PC-3 (cell line): ENCODE measurements at regions of chr18 and their contacts with region 1.

Region 1: GRCh38 chr18:23307567-23308295 is 145.4 kb upstream of the RIOK3 start:
- DNase-seq: peak; percentile 32
- ATAC-seq: peak; percentile 16; the same call in 1 of the 2 replicates
- H3K4me3 ChIP-seq: no peak overlapping the region
- H3K27ac ChIP-seq: no peak overlapping the region
- H3K4me1 ChIP-seq: peaks cover 28% of the 10 kb centered on the region
- H3K27me3 ChIP-seq: no peaks in the 10 kb centered on the region
- CTCF ChIP-seq: no peak

Region 2: GRCh38 chr18:23377669-23378301 is 70.1 kb after region 1 on chr18:
- CTCF ChIA-PET with region 1: interaction called, 3 read pairs
- POLR2A ChIA-PET with region 1: no interaction called
- intact Hi-C with region 1: loop called (anchors 1 kb)
- DNase-seq: peak; percentile 89
- ATAC-seq: peak; percentile 65
- H3K4me3 ChIP-seq: peak overlapping the region; percentile 29; the same call in 1 of the 2 replicates
- H3K27ac ChIP-seq: peak overlapping the region; percentile 86
- H3K4me1 ChIP-seq: peaks cover 38% of the 10 kb centered on the region
- H3K27me3 ChIP-seq: no peaks in the 10 kb centered on the region
- CTCF ChIP-seq: no peak

Region 3: GRCh38 chr18:23523429-23524220 is 215.9 kb after region 1 on chr18:
- CTCF ChIA-PET with region 1: no interaction called
- POLR2A ChIA-PET with region 1: interaction called, 10 read pairs
- intact Hi-C with region 1: no loop called
- DNase-seq: peak; percentile 78
- ATAC-seq: peak; percentile 83
- H3K4me3 ChIP-seq: peak overlapping the region; percentile 29; the same call in 1 of the 2 replicates
- H3K27ac ChIP-seq: peak overlapping the region; percentile 86
- H3K4me1 ChIP-seq: peaks cover 26% of the 10 kb centered on the region
- H3K27me3 ChIP-seq: no peaks in the 10 kb centered on the region
- CTCF ChIP-seq: no peak